ENCODE measurements at regions of chr12 and their contacts with region 1.

Region 1: DNA sequence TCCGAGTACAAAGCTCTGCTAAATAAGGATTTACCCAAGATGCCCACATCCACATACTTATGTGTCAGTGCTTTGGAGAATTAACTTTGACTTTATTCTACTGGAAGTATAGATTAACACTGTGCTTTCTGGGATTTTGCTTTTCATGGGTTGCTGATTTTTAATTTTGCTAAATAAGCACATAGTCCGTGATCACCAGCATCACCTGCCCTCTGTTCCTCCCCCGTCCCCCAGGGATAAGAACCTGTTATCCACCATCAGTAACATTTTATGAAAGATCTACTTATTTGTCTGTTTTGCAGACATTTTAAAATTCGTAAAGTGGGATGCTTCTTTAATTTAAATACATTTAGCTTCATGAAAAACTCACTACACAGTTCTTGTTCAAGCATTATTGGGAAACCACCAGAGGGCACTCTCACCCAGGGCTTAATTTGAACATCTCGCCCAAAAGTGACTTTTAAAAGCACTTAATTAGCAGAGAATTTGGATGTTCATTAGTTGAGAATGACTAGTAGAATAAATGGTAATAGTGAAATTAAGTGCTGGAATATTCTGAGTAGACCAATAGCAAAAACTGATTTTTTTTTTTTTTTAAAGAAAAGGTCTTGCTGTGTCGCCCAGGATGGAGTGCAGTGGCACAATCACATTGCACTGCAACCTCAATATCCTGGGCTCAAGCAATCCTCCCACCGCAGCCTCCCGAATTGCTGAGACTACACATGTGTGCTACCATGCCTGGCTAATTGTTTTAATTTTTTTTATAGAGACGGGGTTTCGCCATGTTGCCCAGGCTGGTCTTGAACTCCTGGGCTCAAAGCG is 35.7 kb downstream of the MRPL42 start:
- DNase-seq: peak; percentile 38
- ATAC-seq: peak; percentile 65
- H3K4me3 ChIP-seq: no peak overlapping the region
- H3K27ac ChIP-seq: no peak overlapping the region
- H3K4me1 ChIP-seq: peaks cover 10% of the 10 kb centered on the region; the same call in 1 of the 2 replicates
- H3K27me3 ChIP-seq: no peaks in the 10 kb centered on the region
- CTCF ChIP-seq: peak; percentile 84

Region 2: GRCh38 chr12:93569656-93570551 is 66.9 kb after region 1 on chr12:
- CTCF ChIA-PET with region 1: interaction called, 18 read pairs
- POLR2A ChIA-PET with region 1: interaction called, 9 read pairs
- in situ Hi-C with region 1: no loop called
- intact Hi-C with region 1: loop called (anchors 2 kb)
- DNase-seq: no peak
- ATAC-seq: peak; percentile 75
- H3K4me3 ChIP-seq: peak overlapping the region; percentile 71 to 96
- H3K27ac ChIP-seq: peak overlapping the region; percentile 78
- H3K4me1 ChIP-seq: peaks cover 16% of the 10 kb centered on the region
- H3K27me3 ChIP-seq: no peaks in the 10 kb centered on the region
- CTCF ChIP-seq: peak; percentile 93

Region 3: DNA sequence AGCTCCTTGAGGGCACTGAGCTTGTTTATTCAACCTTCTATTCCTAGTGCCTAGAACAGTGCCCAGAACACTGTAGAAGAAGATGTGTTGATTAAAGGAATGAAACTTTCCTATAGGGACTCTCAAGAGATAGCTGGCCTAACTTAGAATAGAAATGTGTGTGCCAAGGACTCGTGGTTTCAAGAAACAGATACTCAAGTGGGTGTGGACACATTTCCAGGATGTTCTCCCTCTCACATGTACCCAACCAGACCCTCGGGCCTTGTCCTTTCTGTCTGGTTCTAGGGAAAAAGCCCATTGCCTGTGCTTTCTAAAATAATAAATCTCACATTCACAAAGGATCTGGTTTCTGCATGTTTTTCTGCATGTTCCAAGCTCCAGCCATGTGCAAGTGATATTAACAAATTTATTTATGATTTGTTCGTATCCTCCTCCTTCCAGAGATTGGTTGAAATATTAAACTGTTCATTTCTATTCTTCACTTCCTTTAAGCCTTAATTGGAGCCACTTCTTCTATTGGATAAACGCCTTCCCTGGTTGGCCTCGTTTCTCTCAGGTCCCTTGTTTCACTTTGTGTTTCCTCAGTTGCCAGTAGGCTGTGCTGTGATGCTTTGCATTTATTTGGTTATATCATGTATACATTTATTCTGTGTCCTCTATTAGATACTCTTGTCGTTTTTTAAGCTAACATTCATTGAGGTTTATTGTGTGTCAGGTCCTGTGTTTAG is 263.9 kb after region 1 on chr12:
- CTCF ChIA-PET with region 1: no interaction called
- POLR2A ChIA-PET with region 1: no interaction called
- in situ Hi-C with region 1: no loop called
- intact Hi-C with region 1: loop called (anchors 5 kb)
- DNase-seq: no peak
- ATAC-seq: peak; percentile 90
- H3K4me3 ChIP-seq: no peak overlapping the region
- H3K27ac ChIP-seq: no peak overlapping the region
- H3K4me1 ChIP-seq: peaks cover 3% of the 10 kb centered on the region
- H3K27me3 ChIP-seq: no peaks in the 10 kb centered on the region
- CTCF ChIP-seq: peak; percentile 75

Region 4: GRCh38 chr12:94092516-94093241 is 589.7 kb after region 1 on chr12:
- CTCF ChIA-PET with region 1: no interaction called
- POLR2A ChIA-PET with region 1: interaction called, 19 read pairs
- in situ Hi-C with region 1: no loop called
- intact Hi-C with region 1: no loop called
- DNase-seq: no peak
- ATAC-seq: no peak
- H3K4me3 ChIP-seq: no peak overlapping the region
- H3K27ac ChIP-seq: no peak overlapping the region
- H3K4me1 ChIP-seq: no peaks in the 10 kb centered on the region
- H3K27me3 ChIP-seq: no peaks in the 10 kb centered on the region
- CTCF ChIP-seq: no peak

Measured in Panc1 (cell line).